HepG2 (cell line): ENCODE measurements at regions of chr22 and their contacts with region 1.

Region 1: GRCh38 chr22:36221799-36222751 is 17.3 kb downstream of the APOL2 start:
- DNase-seq: peak; percentile 37
- ATAC-seq: peak; percentile 86
- H3K4me3 ChIP-seq: no peak overlapping the region
- H3K27ac ChIP-seq: no peak overlapping the region
- H3K4me1 ChIP-seq: peaks cover 22% of the 10 kb centered on the region
- H3K27me3 ChIP-seq: no peaks in the 10 kb centered on the region
- CTCF ChIP-seq: peak; percentile 89
- EP300 ChIP-seq: no peak
- POLR2A ChIP-seq: no peak
- RAD21 ChIP-seq: peak; percentile 46

Region 2: GRCh38 chr22:36144886-36145541 is 77.1 kb before region 1 on chr22:
- CTCF ChIA-PET with region 1: no interaction called
- POLR2A ChIA-PET with region 1: no interaction called
- in situ Hi-C with region 1: loop called (anchors 10 kb)
- intact Hi-C with region 1: no loop called
- DNase-seq: peak; percentile 47
- ATAC-seq: peak; percentile 83
- H3K4me3 ChIP-seq: no peak overlapping the region
- H3K27ac ChIP-seq: no peak overlapping the region
- H3K4me1 ChIP-seq: peaks cover 26% of the 10 kb centered on the region
- H3K27me3 ChIP-seq: no peaks in the 10 kb centered on the region
- CTCF ChIP-seq: peak; percentile 86
- EP300 ChIP-seq: no peak
- POLR2A ChIP-seq: no peak
- RAD21 ChIP-seq: peak; percentile 74

Region 3: DNA sequence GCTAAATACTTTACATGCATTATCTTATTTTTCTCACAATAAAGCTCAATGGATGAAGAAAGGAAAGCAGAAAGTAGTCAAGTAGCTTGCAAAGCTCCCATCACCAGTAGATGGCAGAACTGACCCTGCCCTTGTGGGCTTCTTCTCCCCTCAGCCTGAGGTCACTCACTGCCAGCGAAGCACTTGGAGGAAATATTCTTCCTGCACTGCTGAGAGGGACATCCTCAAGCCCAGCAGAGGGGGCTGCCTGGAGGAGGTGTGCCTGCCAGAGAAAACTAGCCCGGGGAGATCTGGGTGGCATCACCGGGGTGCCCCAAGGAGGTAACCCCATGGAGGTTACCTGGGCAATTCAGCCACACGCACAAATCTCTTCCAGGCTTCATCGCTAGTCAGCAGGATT is 27.1 kb before region 1 on chr22:
- CTCF ChIA-PET with region 1: interaction called, 22 read pairs
- POLR2A ChIA-PET with region 1: no interaction called
- in situ Hi-C with region 1: no loop called
- intact Hi-C with region 1: no loop called
- DNase-seq: peak; percentile 40
- ATAC-seq: peak; percentile 78
- H3K4me3 ChIP-seq: no peak overlapping the region
- H3K27ac ChIP-seq: no peak overlapping the region
- H3K4me1 ChIP-seq: peaks cover 30% of the 10 kb centered on the region
- H3K27me3 ChIP-seq: no peaks in the 10 kb centered on the region
- CTCF ChIP-seq: peak; percentile 85
- EP300 ChIP-seq: no peak
- POLR2A ChIP-seq: no peak
- RAD21 ChIP-seq: peak; percentile 70